Endothelial cell of umbilical vein (primary cell): ENCODE measurements at regions of chr20 and their contacts with region 1.

Region 1: GRCh38 chr20:23361598-23362384 is at the start of gene GZF1:
- DNase-seq: peak; percentile 100
- H3K4me3 ChIP-seq: peak within 1 kb of the TSS; percentile 65 to 73 (median 67)
- H3K27ac ChIP-seq: peak within 1 kb of the TSS; percentile 90
- H3K4me1 ChIP-seq: peaks cover 40% of the 10 kb centered on the region
- H3K27me3 ChIP-seq: no peaks in the 10 kb centered on the region
- CTCF ChIP-seq: no peak
- POLR2A ChIP-seq: peak; percentile 93
- total RNA-seq, gene GZF1: 10.0 and 12.5 TPM in 2 replicates

Region 2: DNA sequence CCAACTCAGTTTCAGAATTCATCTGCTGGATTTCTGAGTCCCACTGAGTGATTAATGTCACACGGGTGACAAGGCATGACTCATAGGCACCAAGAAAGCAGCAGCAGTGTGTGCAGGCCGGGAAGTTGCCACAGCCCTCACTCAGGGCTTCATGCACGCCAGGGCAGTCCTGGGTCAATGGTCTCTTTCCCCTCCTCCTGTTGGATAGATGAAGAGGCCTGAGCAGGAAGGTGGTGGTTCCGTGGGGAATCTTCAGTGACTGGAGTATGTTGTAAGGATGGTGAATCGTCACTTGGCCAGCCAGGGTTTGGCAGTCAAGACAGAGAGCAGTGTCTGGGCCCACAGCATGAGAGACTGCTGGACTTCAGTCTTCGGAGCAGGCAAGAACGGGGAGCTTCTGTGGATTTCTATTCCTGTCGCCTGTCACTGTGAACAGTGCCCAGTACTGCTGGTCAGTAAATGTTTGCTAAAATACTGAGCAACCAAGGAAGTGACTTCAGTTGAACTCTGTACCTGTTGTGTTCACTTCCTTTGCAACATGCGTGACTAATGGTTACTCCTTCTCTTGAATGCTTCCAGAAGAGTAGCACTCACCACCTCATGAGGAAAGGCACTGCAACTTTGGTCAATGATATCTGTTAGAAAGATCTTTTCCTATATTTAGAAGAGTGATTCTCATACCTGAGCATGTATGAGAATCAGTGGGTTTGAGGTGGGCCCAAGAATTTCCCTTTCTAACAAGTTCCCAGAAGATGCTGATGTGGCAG is 213.6 kb before region 1 on chr20:
- CTCF ChIA-PET with region 1: no interaction called
- POLR2A ChIA-PET with region 1: no interaction called
- dilution Hi-C with region 1: no loop called
- intact Hi-C with region 1: loop called (anchors 5 kb)
- DNase-seq: peak; percentile 84
- H3K4me3 ChIP-seq: no peak overlapping the region
- H3K27ac ChIP-seq: peak overlapping the region; percentile 88
- H3K4me1 ChIP-seq: peaks cover 85% of the 10 kb centered on the region
- H3K27me3 ChIP-seq: no peaks in the 10 kb centered on the region
- CTCF ChIP-seq: no peak
- POLR2A ChIP-seq: no peak

Region 3: DNA sequence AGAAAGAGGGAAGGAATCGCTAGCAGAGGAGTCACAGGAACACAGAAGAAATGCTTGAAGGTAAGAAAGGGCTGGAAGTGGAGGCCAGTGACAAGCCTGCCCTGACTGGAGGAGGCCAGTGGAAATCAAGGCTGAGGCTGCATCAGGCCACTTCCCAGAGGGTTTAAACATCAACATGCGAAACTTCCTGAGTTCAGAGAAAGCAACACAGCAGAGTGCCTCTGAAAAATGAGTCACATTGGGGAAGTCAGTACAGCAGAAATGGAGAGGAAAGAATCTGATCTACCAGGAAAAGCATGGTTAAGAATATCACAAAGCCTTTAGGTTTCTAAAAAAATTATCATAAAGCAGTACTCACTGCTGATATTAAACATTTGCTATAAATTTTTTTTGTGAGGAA is 36.2 kb after region 1 on chr20:
- CTCF ChIA-PET with region 1: no interaction called
- POLR2A ChIA-PET with region 1: no interaction called
- dilution Hi-C with region 1: no loop called
- intact Hi-C with region 1: loop called (anchors 1 kb)
- DNase-seq: peak; percentile 88
- H3K4me3 ChIP-seq: no peak overlapping the region
- H3K27ac ChIP-seq: peak overlapping the region; percentile 74
- H3K4me1 ChIP-seq: peaks cover 17% of the 10 kb centered on the region
- H3K27me3 ChIP-seq: no peaks in the 10 kb centered on the region
- CTCF ChIP-seq: no peak
- POLR2A ChIP-seq: no peak